CD4-positive, alpha-beta memory T cell (primary cell): ENCODE measurements at regions of chr10 and their contacts with region 1.

Region 1: DNA sequence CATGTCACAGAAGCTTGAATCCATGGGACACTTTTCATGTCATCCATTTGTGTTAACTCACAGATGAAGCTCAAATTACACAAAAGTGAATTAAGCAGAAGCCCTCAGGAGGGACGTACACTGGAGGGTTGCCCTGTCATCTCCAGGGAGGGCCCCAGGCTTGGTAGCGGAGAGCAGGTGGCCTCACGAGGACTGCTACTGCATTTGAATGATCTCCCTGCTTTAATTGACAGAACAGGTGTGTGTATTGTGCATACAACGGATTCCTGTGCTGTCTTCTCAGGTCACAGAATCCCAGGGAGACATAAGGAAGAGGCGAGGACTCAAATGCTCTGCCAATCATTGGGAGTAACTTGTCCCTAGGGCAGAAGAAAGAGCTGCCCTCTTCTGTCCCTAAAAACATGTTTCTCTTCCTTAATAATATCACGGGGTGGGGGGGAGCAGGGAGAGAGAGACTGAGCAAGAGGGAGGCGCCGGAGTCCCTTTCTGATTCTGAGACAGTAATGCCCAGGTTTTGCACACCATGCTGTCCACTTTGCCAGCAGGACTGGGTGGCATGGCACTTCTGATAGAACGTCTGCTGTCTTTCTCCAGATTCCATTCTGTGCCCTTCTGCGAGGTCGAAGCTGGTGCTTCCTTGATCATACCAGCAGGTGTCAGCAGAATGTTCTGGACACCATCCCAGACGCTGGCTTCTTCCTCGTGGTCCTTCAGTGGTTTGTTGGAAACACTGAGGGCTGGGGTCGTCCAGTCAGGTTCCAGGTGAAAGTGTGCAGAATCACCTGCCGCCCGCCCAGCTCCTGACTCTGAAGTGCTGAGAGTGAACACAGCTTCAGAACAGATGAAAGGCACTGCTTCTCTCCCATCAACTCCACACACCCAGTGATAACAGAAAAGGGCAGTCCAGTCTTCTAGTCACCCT is 26.2 kb upstream of the RASGEF1A start:
- DNase-seq: peak in 4 of 5 donors; percentile 40 to 54 (median 46)
- H3K4me3 ChIP-seq: peak overlapping the region in 1 of 2 donors; percentile 3
- H3K4me3 Mint-ChIP-seq: peak overlapping the region; percentile 3 to 87 (median 70)
- H3K27ac ChIP-seq: peak overlapping the region; percentile 53
- H3K27ac Mint-ChIP-seq: peak overlapping the region; percentile 86 to 97 (median 94)
- H3K4me1 ChIP-seq: peaks cover 66% of the 10 kb centered on the region
- H3K4me1 Mint-ChIP-seq: peaks cover 42 to 87% (median 66%) of the 10 kb centered on the region in 4 donors
- H3K27me3 ChIP-seq: no peaks in the 10 kb centered on the region
- H3K27me3 Mint-ChIP-seq: no peaks in the 10 kb centered on the region

Region 2: GRCh38 chr10:43204943-43205671 is 87.9 kb before region 1 on chr10:
- CTCF ChIA-PET with region 1: interaction called, 18 read pairs
- POLR2A ChIA-PET with region 1: interaction called, 3 read pairs
- intact Hi-C with region 1: loop called (anchors 10 kb)
- DNase-seq: peak in 4 of 5 donors; percentile 29 to 52 (median 47)
- H3K4me3 ChIP-seq: no peak overlapping the region
- H3K4me3 Mint-ChIP-seq: no peak overlapping the region
- H3K27ac ChIP-seq: no peak overlapping the region
- H3K27ac Mint-ChIP-seq: peak overlapping the region in 2 of 7 donors; percentile 53 to 66
- H3K4me1 ChIP-seq: peaks cover 8% of the 10 kb centered on the region
- H3K4me1 Mint-ChIP-seq: peaks cover 0 to 10% (median 2%) of the 10 kb centered on the region in 4 donors
- H3K27me3 ChIP-seq: no peaks in the 10 kb centered on the region
- H3K27me3 Mint-ChIP-seq: no peaks in the 10 kb centered on the region

Region 3: GRCh38 chr10:43304687-43305340 is 11.8 kb after region 1 on chr10:
- CTCF ChIA-PET with region 1: interaction called, 39 read pairs
- POLR2A ChIA-PET with region 1: interaction called, 21 read pairs
- intact Hi-C with region 1: no loop called
- DNase-seq: peak in 4 of 5 donors; percentile 41 to 68 (median 44)
- H3K4me3 ChIP-seq: peak overlapping the region in 1 of 2 donors; percentile 44
- H3K4me3 Mint-ChIP-seq: peak overlapping the region; percentile 74 to 87 (median 84)
- H3K27ac ChIP-seq: peak overlapping the region; percentile 8
- H3K27ac Mint-ChIP-seq: peak overlapping the region; percentile 55 to 91 (median 88)
- H3K4me1 ChIP-seq: peaks cover 47% of the 10 kb centered on the region
- H3K4me1 Mint-ChIP-seq: peaks cover 48 to 73% (median 60%) of the 10 kb centered on the region in 4 donors
- H3K27me3 ChIP-seq: no peaks in the 10 kb centered on the region
- H3K27me3 Mint-ChIP-seq: no peaks in the 10 kb centered on the region

Region 4: DNA sequence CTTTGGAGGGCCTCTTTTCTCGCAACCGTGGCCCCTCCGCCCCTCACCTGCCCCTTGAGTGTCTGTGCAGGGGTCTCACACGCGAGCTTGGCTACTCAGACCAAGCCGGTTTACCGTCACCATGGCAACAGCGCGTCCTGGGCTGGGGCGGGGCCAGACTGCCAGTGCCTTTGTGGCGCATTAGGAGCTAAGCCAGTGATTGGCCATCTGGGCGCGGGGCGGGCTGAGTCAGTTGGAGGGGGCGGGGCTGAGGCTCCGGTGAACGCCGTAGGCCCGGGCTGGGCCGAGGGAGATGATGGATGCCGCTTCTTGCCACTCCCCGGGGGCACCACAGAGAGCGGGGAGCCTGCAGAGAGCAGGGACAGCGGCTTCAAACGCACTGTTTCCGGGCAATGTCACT is 29.8 kb after region 1 on chr10:
- CTCF ChIA-PET with region 1: interaction called, 13 read pairs
- POLR2A ChIA-PET with region 1: interaction called, 7 read pairs
- intact Hi-C with region 1: no loop called
- DNase-seq: peak; percentile 78 to 90 (median 87)
- H3K4me3 ChIP-seq: peak overlapping the region in 1 of 2 donors; percentile 13
- H3K4me3 Mint-ChIP-seq: peak overlapping the region in 7 of 8 donors; percentile 35 to 71 (median 60)
- H3K27ac ChIP-seq: no peak overlapping the region
- H3K27ac Mint-ChIP-seq: peak overlapping the region; percentile 68 to 94 (median 88)
- H3K4me1 ChIP-seq: peaks cover 16% of the 10 kb centered on the region
- H3K4me1 Mint-ChIP-seq: peaks cover 10 to 46% (median 19%) of the 10 kb centered on the region in 4 donors
- H3K27me3 ChIP-seq: no peaks in the 10 kb centered on the region
- H3K27me3 Mint-ChIP-seq: no peaks in the 10 kb centered on the region

Region 5: DNA sequence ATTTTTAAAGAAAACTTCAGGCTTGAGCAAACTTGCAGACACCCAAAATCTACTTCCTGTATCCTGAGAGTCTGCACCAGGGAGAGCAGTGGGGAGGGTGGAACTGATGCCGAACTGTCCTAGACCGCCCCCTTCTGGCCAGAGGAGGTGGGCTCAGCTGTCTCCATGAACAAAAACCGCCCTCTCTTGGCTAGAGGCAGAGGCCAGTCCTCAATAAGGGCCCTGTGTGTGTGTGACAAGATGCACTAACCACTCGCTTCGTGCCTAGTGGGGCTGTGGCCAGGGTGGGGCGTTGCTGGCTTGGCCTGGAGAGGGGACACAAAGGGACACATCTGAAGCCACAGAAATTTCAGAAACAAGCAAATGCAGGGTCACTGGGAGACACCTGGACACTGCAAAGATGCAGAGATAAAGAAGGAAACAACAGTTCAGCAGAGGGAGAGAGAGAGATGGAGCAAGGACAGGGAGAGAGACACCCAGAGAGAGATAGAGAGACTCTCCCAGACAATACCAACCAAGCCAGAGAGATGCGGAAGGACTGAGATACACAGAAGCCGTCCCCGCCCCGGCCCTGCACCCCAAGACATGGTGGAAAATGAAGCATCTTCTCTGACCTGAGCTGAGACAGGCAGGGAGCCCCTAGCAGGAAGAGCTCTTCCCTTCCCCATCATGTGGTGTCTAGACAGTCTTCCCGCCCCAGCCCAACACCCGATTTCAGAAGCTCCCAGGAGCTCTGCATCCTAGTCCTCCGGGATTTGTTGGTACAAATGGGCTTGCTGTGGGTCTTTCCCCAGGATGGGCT is 55.7 kb after region 1 on chr10:
- CTCF ChIA-PET with region 1: interaction called, 153 read pairs
- POLR2A ChIA-PET with region 1: interaction called, 33 read pairs
- intact Hi-C with region 1: loop called (anchors 1 kb)
- DNase-seq: peak; percentile 85 to 87 (median 86)
- H3K4me3 ChIP-seq: no peak overlapping the region
- H3K4me3 Mint-ChIP-seq: peak overlapping the region in 3 of 8 donors; percentile 27 to 50 (median 31)
- H3K27ac ChIP-seq: no peak overlapping the region
- H3K27ac Mint-ChIP-seq: peak overlapping the region in 6 of 7 donors; percentile 36 to 83 (median 57)
- H3K4me1 ChIP-seq: peaks cover 20% of the 10 kb centered on the region
- H3K4me1 Mint-ChIP-seq: peaks cover 16 to 30% (median 23%) of the 10 kb centered on the region in 4 donors
- H3K27me3 ChIP-seq: no peaks in the 10 kb centered on the region
- H3K27me3 Mint-ChIP-seq: peaks cover 6 to 7% of the 10 kb centered on the region in 2 donors

Region 6: GRCh38 chr10:43396928-43397624 is 104.1 kb after region 1 on chr10:
- CTCF ChIA-PET with region 1: no interaction called
- POLR2A ChIA-PET with region 1: interaction called, 12 read pairs
- intact Hi-C with region 1: no loop called
- DNase-seq: peak; percentile 67 to 82 (median 75)
- H3K4me3 ChIP-seq: peak overlapping the region; percentile 10 to 67
- H3K4me3 Mint-ChIP-seq: peak overlapping the region; percentile 79 to 100 (median 96)
- H3K27ac ChIP-seq: peak overlapping the region; percentile 100
- H3K27ac Mint-ChIP-seq: peak overlapping the region; percentile 93 to 99 (median 98)
- H3K4me1 ChIP-seq: peaks cover 81% of the 10 kb centered on the region
- H3K4me1 Mint-ChIP-seq: peaks cover 62 to 95% (median 73%) of the 10 kb centered on the region in 4 donors
- H3K27me3 ChIP-seq: no peaks in the 10 kb centered on the region
- H3K27me3 Mint-ChIP-seq: no peaks in the 10 kb centered on the region

Region 7: GRCh38 chr10:43452356-43452914 is 159.4 kb after region 1 on chr10:
- CTCF ChIA-PET with region 1: no interaction called
- POLR2A ChIA-PET with region 1: interaction called, 10 read pairs
- intact Hi-C with region 1: no loop called
- DNase-seq: no peak
- H3K4me3 ChIP-seq: peak overlapping the region in 1 of 2 donors; percentile 13
- H3K4me3 Mint-ChIP-seq: peak overlapping the region; percentile 70 to 88 (median 80)
- H3K27ac ChIP-seq: peak overlapping the region; percentile 54
- H3K27ac Mint-ChIP-seq: peak overlapping the region; percentile 92 to 97 (median 94)
- H3K4me1 ChIP-seq: peaks cover 52% of the 10 kb centered on the region
- H3K4me1 Mint-ChIP-seq: peaks cover 34 to 51% (median 44%) of the 10 kb centered on the region in 4 donors
- H3K27me3 ChIP-seq: no peaks in the 10 kb centered on the region
- H3K27me3 Mint-ChIP-seq: no peaks in the 10 kb centered on the region